Dorsolateral prefrontal cortex (tissue), 120 donors: ENCODE measurements at regions of chr3 and their contacts with region 1.

Region 1: GRCh38 chr3:30643763-30644462 is 37.5 kb downstream of the TGFBR2 start:
- DNase-seq: no peak
- H3K4me3 ChIP-seq: no peak overlapping the region
- H3K27ac ChIP-seq: peak overlapping the region in 38 of 59 donors; percentile 2 to 75 (median 46)
- H3K27me3 ChIP-seq: no peaks in the 10 kb centered on the region
- CTCF ChIP-seq: no peak

Region 2: GRCh38 chr3:30658328-30659052 is 14.6 kb after region 1 on chr3:
- intact Hi-C with region 1: loop called in 1 of 2 experiments (anchors 1 kb)
- DNase-seq: no peak
- H3K4me3 ChIP-seq: peak overlapping the region in 19 of 59 donors; percentile 0 to 41 (median 23)
- H3K27ac ChIP-seq: peak overlapping the region in 44 of 59 donors; percentile 1 to 81 (median 51)
- H3K27me3 ChIP-seq: no peaks in the 10 kb centered on the region
- CTCF ChIP-seq: peak in 13 of 56 donors; percentile 7 to 42 (median 22)

Region 3: GRCh38 chr3:30904986-30905657 is 261.2 kb after region 1 on chr3:
- intact Hi-C with region 1: no loop called
- DNase-seq: no peak
- H3K4me3 ChIP-seq: no peak overlapping the region
- H3K27ac ChIP-seq: no peak overlapping the region
- H3K27me3 ChIP-seq: peaks cover 0 to 2% (median 0%) of the 10 kb centered on the region in 45 donors
- CTCF ChIP-seq: no peak